SK-N-SH (cell line): ENCODE measurements at regions of chr7 and their contacts with region 1.

Region 1: GRCh38 chr7:99928994-99929729 is at the start of gene GJC3:
- DNase-seq: peak; percentile 85
- H3K4me3 ChIP-seq: peak within 1 kb of the TSS; percentile 36 to 37; a peak in 2 of 4 replicates
- H3K27ac ChIP-seq: no peak within 1 kb of the TSS; a peak in 1 of 4 replicates
- H3K4me1 ChIP-seq: peaks cover 0 to 5% of the 10 kb centered on the region in 2 experiments; a peak in 1 of 4 replicates
- H3K27me3 ChIP-seq: peaks cover 39% of the 10 kb centered on the region; the same call in 1 of the 2 replicates
- CTCF ChIP-seq: peak; percentile 39
- EP300 ChIP-seq: no peak
- RAD21 ChIP-seq: peak; percentile 59
- polyA plus RNA-seq, gene GJC3: not detected in 2 replicates

Region 2: DNA sequence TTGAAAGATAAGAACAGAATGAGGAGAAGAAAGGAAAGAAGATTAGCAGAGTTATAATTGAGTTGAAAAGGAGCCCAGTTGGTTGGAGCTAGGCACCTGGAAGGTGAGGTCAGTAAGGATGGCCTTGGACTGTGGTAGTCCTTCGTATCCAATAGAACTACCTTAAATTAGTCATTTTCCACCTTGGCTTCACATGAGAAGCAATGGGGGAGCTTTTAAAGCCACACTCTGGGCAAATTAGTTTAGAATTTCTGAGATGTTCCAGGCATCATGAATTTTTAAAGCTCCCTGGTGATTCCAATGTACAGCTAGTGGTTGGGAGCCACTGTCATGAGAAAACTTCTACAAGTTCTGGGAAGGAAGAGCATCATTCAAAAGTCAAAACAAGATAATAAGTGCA is 222.1 kb before region 1 on chr7:
- CTCF ChIA-PET with region 1: no interaction called
- POLR2A ChIA-PET with region 1: no interaction called
- DNase-seq: no peak
- H3K4me3 ChIP-seq: no peak overlapping the region
- H3K27ac ChIP-seq: no peak overlapping the region
- H3K4me1 ChIP-seq: no peaks in the 10 kb centered on the region
- H3K27me3 ChIP-seq: no peaks in the 10 kb centered on the region
- CTCF ChIP-seq: no peak
- EP300 ChIP-seq: no peak
- RAD21 ChIP-seq: no peak

Region 3: GRCh38 chr7:99949638-99950228 is 20.6 kb after region 1 on chr7:
- CTCF ChIA-PET with region 1: interaction called, 11 read pairs
- POLR2A ChIA-PET with region 1: interaction called, 3 read pairs
- DNase-seq: no peak
- H3K4me3 ChIP-seq: no peak overlapping the region
- H3K27ac ChIP-seq: no peak overlapping the region
- H3K4me1 ChIP-seq: no peaks in the 10 kb centered on the region
- H3K27me3 ChIP-seq: peaks cover 26% of the 10 kb centered on the region; the same call in 1 of the 2 replicates
- CTCF ChIP-seq: peak; percentile 57
- EP300 ChIP-seq: no peak
- RAD21 ChIP-seq: peak; percentile 52

Region 4: DNA sequence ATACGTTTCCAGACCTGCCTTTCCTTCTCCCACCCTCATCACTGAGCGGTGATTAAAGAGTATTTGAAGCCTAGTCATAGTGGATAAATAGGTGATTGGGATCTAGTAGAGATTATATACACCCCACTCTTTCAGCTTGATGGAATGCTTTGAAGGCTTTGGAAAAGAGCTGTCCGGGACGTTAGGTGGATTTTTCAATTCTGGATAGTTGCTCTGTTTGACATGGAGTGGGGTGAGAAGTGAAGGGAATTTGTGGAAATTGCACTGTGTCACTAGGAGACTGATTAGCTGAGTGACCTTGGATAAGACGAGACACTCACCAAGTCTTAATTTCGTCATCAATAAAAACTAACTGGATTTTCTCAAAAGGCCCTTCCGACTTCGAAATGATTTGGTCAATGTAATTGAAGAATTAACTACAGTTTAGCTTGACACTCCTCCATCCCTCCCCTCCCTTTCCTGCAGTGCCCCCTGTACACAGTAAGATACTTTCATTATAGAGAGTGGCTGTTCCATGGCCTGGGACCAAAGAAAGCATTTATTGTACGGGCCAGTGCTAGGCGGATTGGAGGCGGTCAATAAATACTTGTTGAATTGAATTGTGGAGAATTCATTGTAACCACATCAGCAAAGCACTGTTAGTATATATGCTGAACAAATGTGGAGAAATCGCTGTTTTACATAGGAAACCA is 87.2 kb after region 1 on chr7:
- CTCF ChIA-PET with region 1: no interaction called
- POLR2A ChIA-PET with region 1: no interaction called
- DNase-seq: peak; percentile 72
- H3K4me3 ChIP-seq: peak overlapping the region; percentile 78 to 89
- H3K27ac ChIP-seq: peak overlapping the region; percentile 78 to 85
- H3K4me1 ChIP-seq: peaks cover 0 to 12% of the 10 kb centered on the region in 2 experiments; a peak in 3 of 4 replicates
- H3K27me3 ChIP-seq: no peaks in the 10 kb centered on the region
- CTCF ChIP-seq: no peak; the same call in 1 of the 2 replicates
- EP300 ChIP-seq: no peak
- RAD21 ChIP-seq: no peak